ENCODE measurements at regions of chr2 and their contacts with region 1.

Region 1: DNA sequence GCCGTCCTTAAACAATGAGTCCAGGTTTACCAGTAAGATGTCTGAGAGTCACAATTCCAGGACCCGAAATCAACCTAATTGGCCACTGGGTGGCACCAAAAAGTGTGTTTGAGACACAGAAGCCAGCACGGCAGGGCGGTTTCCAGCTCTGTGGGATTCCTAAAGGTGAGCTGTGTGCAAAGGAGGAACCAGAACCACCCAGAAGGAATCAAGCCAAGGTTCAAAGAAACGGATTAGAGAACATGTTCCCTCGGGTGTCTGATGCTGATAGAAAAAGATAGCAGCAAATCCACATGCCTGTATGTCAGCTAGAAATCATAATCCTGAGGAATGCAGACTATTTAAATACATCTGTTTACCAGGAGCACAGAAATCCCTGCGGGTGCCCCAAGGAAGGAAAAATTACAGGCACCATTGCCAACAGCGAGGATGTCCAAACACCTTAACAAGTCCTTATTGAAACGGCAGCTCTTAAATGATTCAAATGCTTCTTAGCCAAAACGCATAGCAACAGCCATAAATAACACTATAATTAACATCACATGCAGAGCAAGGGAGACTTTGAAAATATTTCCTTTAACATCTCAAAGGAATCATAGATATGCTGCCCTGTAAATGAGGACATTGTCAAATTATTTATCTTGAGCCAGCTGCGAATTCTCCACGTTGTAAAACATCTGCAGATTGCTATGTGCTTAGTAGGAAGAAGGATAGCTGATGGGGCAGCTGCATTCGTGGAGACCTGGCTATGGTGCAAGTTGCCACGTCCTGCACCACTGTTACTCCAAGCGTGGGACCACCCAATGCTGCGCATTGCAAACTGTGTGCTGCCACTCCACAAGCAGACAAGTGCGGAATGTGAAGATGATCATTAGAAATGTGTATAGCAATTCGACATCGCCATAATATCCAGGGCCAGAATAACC is 318.7 kb upstream of the NCKAP5 start:
- DNase-seq: peak in 7 of 9 donors; percentile 11 to 44 (median 33)
- ATAC-seq: no peak
- H3K4me3 ChIP-seq: no peak overlapping the region
- H3K4me3 Mint-ChIP-seq: no peak overlapping the region
- H3K27ac ChIP-seq: no peak overlapping the region
- H3K27ac Mint-ChIP-seq: peak overlapping the region in 1 of 9 donors; percentile 68
- H3K4me1 ChIP-seq: no peaks in the 10 kb centered on the region
- H3K4me1 Mint-ChIP-seq: peaks cover 0 to 2% (median 0%) of the 10 kb centered on the region in 7 donors
- H3K27me3 ChIP-seq: no peaks in the 10 kb centered on the region
- H3K27me3 Mint-ChIP-seq: peaks cover 4 to 12% (median 6%) of the 10 kb centered on the region in 5 donors

Region 2: DNA sequence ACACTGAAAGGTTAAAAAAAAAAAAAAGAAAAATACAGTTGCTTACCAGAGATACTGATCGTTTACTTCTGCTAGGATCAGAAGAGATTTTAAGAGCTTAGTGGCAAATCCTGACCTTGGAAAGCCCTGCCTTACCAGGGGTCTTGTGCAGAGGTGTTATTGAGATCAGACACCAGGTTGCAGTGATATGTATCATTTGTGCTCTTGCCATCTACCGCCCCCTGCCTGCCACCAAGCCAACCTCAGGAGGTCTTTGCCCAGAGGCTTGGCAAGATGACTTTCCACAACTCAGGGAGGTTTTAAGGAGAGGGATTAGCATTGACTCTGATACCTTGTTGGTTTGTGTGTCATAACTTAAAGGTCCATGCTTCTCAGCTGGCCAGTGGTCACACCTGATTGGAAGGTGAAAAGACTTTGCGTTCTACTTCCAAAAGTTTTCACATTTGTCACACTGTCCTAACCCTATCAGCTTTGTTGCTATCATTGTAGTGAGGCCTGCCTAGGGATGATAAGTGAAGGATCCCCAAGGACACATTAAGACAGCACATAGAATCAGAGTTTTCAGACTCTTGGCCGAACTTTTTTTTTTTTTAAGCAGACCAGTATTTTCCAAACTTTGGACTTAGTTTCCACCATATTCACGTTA is 320.7 kb after region 1 on chr2:
- CTCF ChIA-PET with region 1: interaction called, 3 read pairs
- POLR2A ChIA-PET with region 1: no interaction called
- intact Hi-C with region 1: loop called (anchors 5 kb)
- DNase-seq: peak; percentile 39 to 62 (median 53)
- ATAC-seq: peak; percentile 92
- H3K4me3 ChIP-seq: no peak overlapping the region
- H3K4me3 Mint-ChIP-seq: no peak overlapping the region
- H3K27ac ChIP-seq: no peak overlapping the region
- H3K27ac Mint-ChIP-seq: peak overlapping the region in 1 of 9 donors; percentile 53
- H3K4me1 ChIP-seq: peaks cover 21 to 34% of the 10 kb centered on the region in 2 donors
- H3K4me1 Mint-ChIP-seq: peaks cover 5 to 17% (median 11%) of the 10 kb centered on the region in 7 donors
- H3K27me3 ChIP-seq: no peaks in the 10 kb centered on the region
- H3K27me3 Mint-ChIP-seq: no peaks in the 10 kb centered on the region

Region 3: DNA sequence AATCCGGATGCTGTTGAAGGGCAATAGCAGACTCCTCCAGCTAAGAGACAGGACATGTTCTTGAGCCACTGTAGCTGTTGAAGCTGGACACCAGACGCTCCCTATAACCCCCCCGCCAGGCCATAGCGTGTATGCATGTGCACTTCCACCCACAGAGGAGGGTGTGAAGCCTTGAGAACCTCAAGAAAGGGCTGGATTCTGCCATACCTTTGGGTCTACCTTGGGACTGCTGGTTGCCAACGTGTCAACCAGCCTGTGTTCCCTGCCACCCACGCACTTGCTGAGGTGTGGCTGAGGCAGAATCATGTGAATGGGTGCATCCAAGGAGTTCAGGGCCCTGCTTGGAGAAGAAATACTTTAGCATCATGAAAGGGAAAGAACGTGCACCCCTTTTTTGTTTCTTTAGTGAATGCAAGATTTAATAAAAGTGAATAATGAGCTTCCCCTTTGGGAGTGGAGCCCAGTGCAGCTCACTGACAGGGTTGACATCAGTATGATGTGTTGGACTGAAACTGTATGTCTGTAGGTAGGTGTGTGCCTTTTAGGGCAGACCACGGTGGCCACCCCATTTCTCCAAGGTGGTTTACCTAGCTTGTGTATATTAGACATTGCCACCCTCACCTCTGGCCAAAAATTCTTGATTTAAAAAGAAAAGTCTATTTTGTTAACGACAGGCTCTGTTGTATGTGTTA is 565.2 kb after region 1 on chr2:
- CTCF ChIA-PET with region 1: no interaction called
- POLR2A ChIA-PET with region 1: no interaction called
- intact Hi-C with region 1: loop called in 1 of 2 experiments (anchors 2 kb)
- DNase-seq: no peak
- ATAC-seq: no peak
- H3K4me3 ChIP-seq: no peak overlapping the region
- H3K4me3 Mint-ChIP-seq: no peak overlapping the region
- H3K27ac ChIP-seq: no peak overlapping the region
- H3K27ac Mint-ChIP-seq: peak overlapping the region in 4 of 9 donors; percentile 8 to 70 (median 32)
- H3K4me1 ChIP-seq: no peaks in the 10 kb centered on the region
- H3K4me1 Mint-ChIP-seq: peaks cover 0 to 2% (median 0%) of the 10 kb centered on the region in 7 donors
- H3K27me3 ChIP-seq: no peaks in the 10 kb centered on the region
- H3K27me3 Mint-ChIP-seq: no peaks in the 10 kb centered on the region

Region 4: GRCh38 chr2:135525786-135526185 is 1638.8 kb after region 1 on chr2:
- CTCF ChIA-PET with region 1: no interaction called
- POLR2A ChIA-PET with region 1: no interaction called
- intact Hi-C with region 1: no loop called
- DNase-seq: no peak
- ATAC-seq: no peak
- H3K4me3 ChIP-seq: no peak overlapping the region
- H3K4me3 Mint-ChIP-seq: no peak overlapping the region
- H3K27ac ChIP-seq: no peak overlapping the region
- H3K27ac Mint-ChIP-seq: no peak overlapping the region
- H3K4me1 ChIP-seq: peaks cover 0 to 11% of the 10 kb centered on the region in 2 donors
- H3K4me1 Mint-ChIP-seq: peaks cover 0 to 23% (median 4%) of the 10 kb centered on the region in 7 donors
- H3K27me3 ChIP-seq: no peaks in the 10 kb centered on the region
- H3K27me3 Mint-ChIP-seq: no peaks in the 10 kb centered on the region